AG04449 (cell line): ENCODE measurements at regions of chr3 and their contacts with region 1.

Region 1: DNA sequence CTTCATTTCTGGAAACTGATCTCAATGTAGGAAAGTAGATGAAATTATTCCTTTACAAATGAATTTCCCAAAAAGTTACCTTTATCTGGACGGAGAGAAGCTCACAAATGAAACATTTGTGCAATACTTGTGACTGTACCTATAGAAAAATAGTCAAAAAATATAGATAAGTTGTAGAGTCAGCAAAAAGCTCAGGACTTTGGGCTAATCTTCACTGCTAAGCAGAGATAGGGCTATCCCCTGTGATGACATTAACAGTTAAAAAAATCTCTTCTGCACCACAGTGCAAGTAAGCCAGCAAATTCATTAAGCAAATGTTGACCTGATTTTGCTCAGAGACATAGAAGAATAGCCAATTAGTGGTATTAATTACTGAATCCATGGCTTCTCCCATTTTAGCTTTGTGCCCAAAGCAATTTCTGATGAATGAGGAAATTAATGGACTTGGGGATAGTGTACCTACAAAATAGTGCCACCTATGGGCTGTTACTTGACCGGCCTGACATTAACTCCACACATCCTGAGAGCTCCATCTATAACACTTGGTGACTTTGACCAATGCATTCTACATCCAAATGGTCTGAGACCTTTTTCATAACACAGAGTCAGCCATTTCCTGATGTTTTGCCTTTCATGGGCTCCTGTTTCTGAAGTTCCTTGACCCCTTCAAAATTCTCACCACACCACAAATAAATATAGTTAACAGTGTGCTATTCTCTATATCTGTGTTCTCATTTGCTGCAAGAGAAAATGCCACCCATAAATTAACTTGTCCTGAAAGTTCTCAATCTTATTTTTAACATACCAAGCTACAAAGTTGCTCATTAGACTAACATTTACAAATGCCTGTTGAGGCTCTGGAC is 105.0 kb downstream of the SSR3 start:
- DNase-seq: no peak
- H3K4me3 ChIP-seq: no peak overlapping the region
- CTCF ChIP-seq: peak; percentile 60

Region 2: GRCh38 chr3:156160647-156161046 is 289.3 kb before region 1 on chr3:
- CTCF ChIA-PET with region 1: interaction called, 13 read pairs
- POLR2A ChIA-PET with region 1: no interaction called
- DNase-seq: no peak
- H3K4me3 ChIP-seq: no peak overlapping the region
- CTCF ChIP-seq: no peak

Region 3: GRCh38 chr3:156181323-156181908 is 268.5 kb before region 1 on chr3:
- CTCF ChIA-PET with region 1: interaction called, 16 read pairs
- POLR2A ChIA-PET with region 1: no interaction called
- DNase-seq: no peak
- H3K4me3 ChIP-seq: no peak overlapping the region
- CTCF ChIP-seq: no peak

Region 4: GRCh38 chr3:156409694-156410093 is 40.2 kb before region 1 on chr3:
- CTCF ChIA-PET with region 1: interaction called, 11 read pairs
- POLR2A ChIA-PET with region 1: no interaction called
- DNase-seq: no peak
- H3K4me3 ChIP-seq: no peak overlapping the region
- CTCF ChIP-seq: no peak

Region 5: DNA sequence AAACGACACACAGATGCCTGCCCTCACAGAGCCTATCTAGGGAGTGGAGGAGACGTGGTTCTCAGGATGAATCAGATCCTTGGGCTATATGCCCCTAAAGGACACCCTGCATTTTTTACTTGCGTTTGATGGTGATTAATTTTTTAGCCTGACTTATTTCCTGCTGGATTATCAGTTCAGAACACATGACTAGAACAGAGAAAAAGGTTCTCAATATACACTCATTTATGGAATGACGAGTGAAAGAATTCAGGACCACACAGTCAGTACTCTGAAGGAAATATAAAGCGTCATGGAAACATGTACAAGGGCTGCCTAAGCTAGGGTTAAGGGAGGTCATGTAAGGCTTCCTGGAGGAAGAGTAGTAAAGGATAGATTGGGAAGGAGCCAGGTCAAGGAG is 16.8 kb before region 1 on chr3:
- CTCF ChIA-PET with region 1: interaction called, 40 read pairs
- POLR2A ChIA-PET with region 1: no interaction called
- DNase-seq: no peak
- H3K4me3 ChIP-seq: no peak overlapping the region
- CTCF ChIP-seq: no peak

Region 6: GRCh38 chr3:156474560-156475389 is 24.8 kb after region 1 on chr3:
- CTCF ChIA-PET with region 1: interaction called, 88 read pairs
- POLR2A ChIA-PET with region 1: no interaction called
- DNase-seq: no peak
- H3K4me3 ChIP-seq: no peak overlapping the region
- CTCF ChIP-seq: peak; percentile 14

Region 7: DNA sequence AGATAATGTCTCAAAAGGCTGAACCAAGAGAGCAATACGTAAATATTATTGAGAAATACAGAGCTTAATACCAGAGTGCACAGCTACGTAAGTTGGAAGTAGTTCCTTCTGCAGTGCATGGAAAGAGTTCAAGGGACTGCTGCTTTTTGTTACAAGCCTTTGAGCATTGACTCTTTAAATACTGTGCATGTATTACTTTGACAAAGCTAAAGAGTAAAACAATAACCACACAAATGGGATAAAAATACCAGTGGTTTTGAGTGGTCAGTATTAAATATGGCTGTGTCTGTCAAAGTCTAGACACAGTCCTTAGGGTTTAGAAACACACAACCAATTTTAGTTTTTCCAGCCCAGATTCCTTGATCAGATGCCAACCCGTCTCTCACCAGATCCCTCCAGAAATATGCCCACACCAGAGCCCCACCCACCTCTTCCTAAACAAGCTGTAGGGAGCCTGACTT is 42.9 kb after region 1 on chr3:
- CTCF ChIA-PET with region 1: interaction called, 10 read pairs
- POLR2A ChIA-PET with region 1: no interaction called
- DNase-seq: no peak
- H3K4me3 ChIP-seq: no peak overlapping the region
- CTCF ChIP-seq: no peak